Prostate gland (tissue), 2 donors: ENCODE measurements at regions of chr2 and their contacts with region 1.

Region 1: GRCh38 chr2:203484266-203485112 is 50.6 kb downstream of the RAPH1 start:
- DNase-seq: peak; percentile 21
- H3K4me3 ChIP-seq: no peak overlapping the region
- H3K27ac ChIP-seq: no peak overlapping the region
- H3K4me1 ChIP-seq: no peaks in the 10 kb centered on the region
- H3K27me3 ChIP-seq: no peaks in the 10 kb centered on the region
- CTCF ChIP-seq: peak in 3 of 4 experiments; percentile 43 to 64 (median 53)
- POLR2A ChIP-seq: no peak

Region 2: GRCh38 chr2:203650860-203651613 is 166.5 kb after region 1 on chr2:
- intact Hi-C with region 1: loop called (anchors 10 kb)
- DNase-seq: peak; percentile 56
- H3K4me3 ChIP-seq: no peak overlapping the region
- H3K27ac ChIP-seq: peak overlapping the region; percentile 61 to 74
- H3K4me1 ChIP-seq: peaks cover 14% of the 10 kb centered on the region
- H3K27me3 ChIP-seq: no peaks in the 10 kb centered on the region
- CTCF ChIP-seq: peak in 3 of 4 experiments; percentile 43 to 66 (median 64)
- POLR2A ChIP-seq: no peak

Region 3: GRCh38 chr2:203673933-203674332 is 189.4 kb after region 1 on chr2:
- intact Hi-C with region 1: no loop called
- DNase-seq: no peak
- H3K4me3 ChIP-seq: no peak overlapping the region
- H3K27ac ChIP-seq: no peak overlapping the region
- H3K4me1 ChIP-seq: no peaks in the 10 kb centered on the region
- H3K27me3 ChIP-seq: no peaks in the 10 kb centered on the region
- CTCF ChIP-seq: no peak
- POLR2A ChIP-seq: no peak

Region 4: DNA sequence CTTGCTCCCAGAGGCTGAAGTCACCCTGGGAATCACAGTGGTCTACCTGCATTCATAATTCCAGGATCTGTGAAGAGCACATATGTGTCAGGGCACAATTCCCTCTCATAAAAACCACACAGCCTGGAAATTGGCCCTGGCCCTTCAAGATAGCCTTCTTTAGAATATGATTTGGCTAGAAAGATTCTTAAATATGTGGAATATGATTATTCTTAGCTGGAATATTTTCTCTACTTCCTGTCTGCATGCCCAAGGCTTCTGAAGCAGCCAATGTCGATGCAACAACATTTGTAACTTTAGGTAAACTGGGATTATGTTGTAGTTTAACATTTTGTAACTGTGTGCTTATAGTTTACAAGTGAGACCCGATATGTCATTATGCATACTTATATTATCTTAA is 476.3 kb after region 1 on chr2:
- intact Hi-C with region 1: no loop called
- DNase-seq: no peak
- H3K4me3 ChIP-seq: no peak overlapping the region
- H3K27ac ChIP-seq: no peak overlapping the region
- H3K4me1 ChIP-seq: no peaks in the 10 kb centered on the region
- H3K27me3 ChIP-seq: no peaks in the 10 kb centered on the region
- CTCF ChIP-seq: no peak
- POLR2A ChIP-seq: no peak